ENCODE measurements at regions of chr1 and their contacts with region 1.

Region 1: GRCh38 chr1:32508751-32509140 is 30.5 kb upstream of the ZBTB8A start:
- DNase-seq: no peak
- H3K4me3 ChIP-seq: no peak overlapping the region
- H3K27ac ChIP-seq: no peak overlapping the region
- H3K4me1 ChIP-seq: no peaks in the 10 kb centered on the region
- H3K27me3 ChIP-seq: no peaks in the 10 kb centered on the region
- CTCF ChIP-seq: no peak

Region 2: DNA sequence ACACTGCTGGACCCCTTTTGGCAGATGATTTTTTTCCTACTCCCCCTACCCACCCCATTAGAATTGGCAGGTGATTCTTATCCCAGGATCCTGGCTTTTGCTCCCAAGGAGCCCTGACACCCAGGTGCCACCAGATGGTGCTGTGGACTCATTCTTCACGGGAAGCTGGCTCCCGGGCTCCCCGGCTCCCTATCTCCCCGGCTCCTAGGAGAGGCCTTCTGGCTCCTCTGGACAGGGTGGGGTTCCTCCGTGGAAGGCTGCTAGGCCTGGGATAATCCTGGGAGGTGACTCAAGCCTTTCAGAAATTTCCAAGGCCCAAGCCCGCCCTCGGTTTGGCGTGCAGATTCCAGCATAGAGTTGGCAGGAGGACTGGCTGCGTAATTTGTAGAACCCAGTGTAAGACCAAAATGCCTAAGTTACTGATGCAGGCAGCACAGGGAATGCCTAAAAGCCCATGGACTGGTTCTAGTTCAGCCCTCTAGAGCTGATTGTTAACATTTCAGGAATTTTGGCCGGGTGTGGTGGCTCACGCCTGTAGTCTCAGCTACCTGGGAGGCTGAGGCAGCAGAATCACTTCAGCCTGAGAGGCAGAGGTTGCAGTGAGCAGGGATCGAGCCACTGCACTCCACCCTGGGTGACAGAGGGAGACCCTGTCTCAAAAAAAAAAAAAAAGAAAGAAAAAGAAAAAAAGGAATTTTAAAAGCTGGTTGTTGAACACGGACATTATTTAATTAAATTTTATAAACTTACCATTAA is 107.7 kb before region 1 on chr1:
- CTCF ChIA-PET with region 1: interaction called, 10 read pairs
- POLR2A ChIA-PET with region 1: no interaction called
- intact Hi-C with region 1: no loop called
- DNase-seq: peak; percentile 62 to 77
- H3K4me3 ChIP-seq: no peak overlapping the region
- H3K27ac ChIP-seq: no peak overlapping the region
- H3K4me1 ChIP-seq: peaks cover 4% of the 10 kb centered on the region
- H3K27me3 ChIP-seq: no peaks in the 10 kb centered on the region
- CTCF ChIP-seq: peak; percentile 95

Region 3: GRCh38 chr1:32431736-32432400 is 76.9 kb before region 1 on chr1:
- CTCF ChIA-PET with region 1: interaction called, 11 read pairs
- POLR2A ChIA-PET with region 1: no interaction called
- intact Hi-C with region 1: no loop called
- DNase-seq: no peak
- H3K4me3 ChIP-seq: no peak overlapping the region
- H3K27ac ChIP-seq: no peak overlapping the region
- H3K4me1 ChIP-seq: no peaks in the 10 kb centered on the region
- H3K27me3 ChIP-seq: peaks cover 43% of the 10 kb centered on the region
- CTCF ChIP-seq: no peak

Region 4: DNA sequence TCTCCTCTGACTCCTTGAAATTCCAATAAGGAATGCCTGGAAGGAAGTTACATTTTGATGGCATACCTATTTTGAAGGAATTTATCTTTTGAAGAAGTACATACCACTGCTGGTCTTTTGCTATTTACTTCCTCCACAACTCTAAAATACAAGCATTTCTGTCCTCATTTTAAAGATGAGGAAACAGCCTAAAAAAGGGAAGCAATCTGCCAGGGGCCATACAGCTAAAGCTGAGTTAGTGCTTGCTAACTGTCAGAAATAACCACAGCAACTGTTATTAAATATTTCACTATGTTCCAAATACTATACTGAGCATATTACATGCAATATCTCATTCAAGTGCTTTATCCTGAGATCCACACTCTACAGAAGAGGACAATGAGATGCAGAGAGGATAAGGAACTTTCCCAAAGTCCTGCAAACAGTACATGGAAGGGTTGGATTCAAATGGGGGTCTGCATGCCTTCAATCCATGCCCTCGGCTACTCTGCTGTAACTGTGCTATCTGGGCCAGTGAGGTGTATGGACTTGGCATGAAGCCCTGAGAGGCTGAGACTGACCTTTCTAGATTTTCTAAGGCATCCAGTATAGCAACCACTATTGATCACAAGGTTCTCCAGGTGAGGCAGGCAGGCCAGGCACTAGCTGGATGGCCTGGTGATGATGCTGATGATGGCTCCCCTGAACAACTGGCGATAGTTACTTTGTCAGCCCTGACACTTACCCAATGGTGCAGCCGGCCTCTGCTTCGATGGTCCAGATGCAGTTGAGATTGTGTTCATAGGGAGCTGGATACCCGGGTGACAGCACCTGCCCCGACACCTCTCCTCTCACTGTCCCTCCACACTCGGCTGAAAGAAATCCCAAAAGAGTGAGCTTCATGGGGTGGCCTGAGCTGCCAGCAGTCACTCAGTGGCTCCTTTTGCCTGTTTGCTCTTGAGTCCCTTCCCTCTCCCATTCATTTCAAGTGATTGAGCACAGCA is 1183.8 kb after region 1 on chr1:
- CTCF ChIA-PET with region 1: no interaction called
- POLR2A ChIA-PET with region 1: no interaction called
- intact Hi-C with region 1: no loop called
- DNase-seq: no peak
- H3K4me3 ChIP-seq: no peak overlapping the region
- H3K27ac ChIP-seq: no peak overlapping the region
- H3K4me1 ChIP-seq: no peaks in the 10 kb centered on the region
- H3K27me3 ChIP-seq: peaks cover 62% of the 10 kb centered on the region
- CTCF ChIP-seq: no peak

Measured in PC-9 (cell line).